Sigmoid colon (tissue), 7 donors: ENCODE measurements at regions of chr5 and their contacts with region 1.

Region 1: GRCh38 chr5:50751064-50751657 is 84.7 kb downstream of the PARP8 start:
- DNase-seq: no peak
- H3K4me3 ChIP-seq: no peak overlapping the region
- H3K27ac ChIP-seq: no peak overlapping the region
- H3K4me1 ChIP-seq: no peaks in the 10 kb centered on the region
- H3K27me3 ChIP-seq: no peaks in the 10 kb centered on the region
- CTCF ChIP-seq: peak; percentile 15 to 78 (median 51)
- EP300 ChIP-seq: no peak
- POLR2A ChIP-seq: no peak

Region 2: GRCh38 chr5:50667653-50668595 is 83.2 kb before region 1 on chr5:
- intact Hi-C with region 1: loop called (anchors 5 kb)
- DNase-seq: peak; percentile 79
- H3K4me3 ChIP-seq: peak overlapping the region; percentile 77 to 98 (median 86)
- H3K27ac ChIP-seq: peak overlapping the region; percentile 79 to 89 (median 83)
- H3K4me1 ChIP-seq: peaks cover 0 to 25% (median 10%) of the 10 kb centered on the region in 4 donors
- H3K27me3 ChIP-seq: no peaks in the 10 kb centered on the region
- CTCF ChIP-seq: no peak
- EP300 ChIP-seq: no peak
- POLR2A ChIP-seq: no peak